GM13976 (cell line): ENCODE measurements at regions of chr14 and their contacts with region 1.

Region 1: GRCh38 chr14:54572316-54572715 is 5.4 kb downstream of the SAMD4A start:
- DNase-seq: no peak
- CTCF ChIP-seq: peak; percentile 24

Region 2: GRCh38 chr14:54683882-54684794 is 111.8 kb after region 1 on chr14:
- in situ Hi-C with region 1: loop called (anchors 10 kb)
- DNase-seq: no peak
- CTCF ChIP-seq: no peak

Region 3: DNA sequence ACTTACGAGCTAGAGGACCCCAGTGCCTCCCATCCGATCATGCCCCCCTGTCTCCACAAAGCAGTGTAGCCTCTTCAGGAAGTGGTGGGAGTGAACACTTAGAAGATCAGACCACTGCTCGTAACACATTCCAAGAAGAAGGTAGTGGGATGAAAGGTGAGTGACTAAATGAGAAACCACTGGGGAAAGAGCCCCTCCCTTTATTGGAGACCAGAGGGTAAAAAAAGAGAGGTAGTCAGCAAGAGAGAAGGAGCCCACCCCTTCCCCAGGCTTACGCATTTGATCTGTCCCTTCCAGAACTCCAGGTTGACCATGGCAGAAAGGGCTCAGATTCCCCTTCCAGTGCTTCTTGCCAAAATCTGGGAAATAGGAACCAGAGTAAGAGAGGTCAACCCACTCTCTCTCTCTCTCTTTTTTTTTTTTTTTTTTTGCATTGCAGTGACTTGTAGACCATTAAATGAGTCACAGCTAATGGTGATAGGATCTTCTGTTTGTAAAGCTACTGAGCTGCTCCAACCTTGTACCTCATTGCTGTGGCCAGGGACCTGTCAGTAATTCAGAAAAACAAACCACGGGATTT is 164.9 kb after region 1 on chr14:
- in situ Hi-C with region 1: no loop called
- DNase-seq: no peak
- CTCF ChIP-seq: no peak